Sciatic nerve (tissue), 2 donors: ENCODE measurements at regions of chr4 and their contacts with region 1.

Region 1: GRCh38 chr4:18754191-18754590 is 732.6 kb upstream of the LCORL start:
- DNase-seq: no peak
- ATAC-seq: no peak

Region 2: DNA sequence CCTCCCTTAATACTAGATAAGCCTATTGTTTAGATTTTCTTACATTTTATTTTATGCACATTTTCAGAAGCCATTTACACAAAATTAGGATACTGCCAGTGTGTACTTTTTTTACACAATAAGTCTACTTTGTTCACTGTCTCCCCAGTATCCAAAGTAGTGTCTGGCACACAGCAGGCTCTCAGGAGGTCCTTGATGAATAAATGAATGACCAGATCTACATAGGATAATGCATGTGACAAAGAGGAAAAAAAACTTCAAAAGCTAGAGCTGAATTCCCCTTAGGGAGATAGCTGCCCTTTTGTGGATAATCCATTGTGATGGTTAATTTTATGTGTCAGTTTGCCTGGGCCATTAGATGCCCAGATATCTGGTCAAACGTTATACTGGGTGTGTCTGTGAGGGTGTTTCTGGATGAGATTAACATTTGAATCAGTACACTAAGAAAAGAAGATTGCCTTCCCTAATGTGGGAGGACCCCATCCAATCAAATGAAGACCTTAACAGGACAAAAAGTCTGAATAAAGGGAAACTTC is 1303.9 kb before region 1 on chr4:
- intact Hi-C with region 1: no loop called
- DNase-seq: no peak
- ATAC-seq: no peak

Region 3: GRCh38 chr4:17664755-17665154 is 1089.4 kb before region 1 on chr4:
- intact Hi-C with region 1: loop called (anchors 10 kb)
- DNase-seq: no peak
- ATAC-seq: no peak

Region 4: DNA sequence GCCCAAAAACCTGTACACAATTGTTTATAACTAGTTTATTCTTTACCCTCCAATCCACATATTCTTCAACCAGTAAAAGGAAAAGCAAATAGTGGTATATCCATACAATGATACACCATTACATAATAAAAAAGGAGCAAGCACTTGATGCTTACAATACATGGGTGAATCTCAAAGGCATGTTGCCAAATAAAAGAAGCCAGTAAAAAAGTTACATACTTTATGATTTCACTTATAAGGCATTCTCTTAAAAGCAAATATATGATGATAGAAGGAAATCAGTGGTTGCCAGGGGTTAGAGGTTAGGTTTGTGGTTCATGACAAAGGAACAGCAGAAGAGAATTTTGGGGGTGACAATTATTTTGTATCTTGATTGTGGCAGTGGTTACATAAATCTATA is 163.5 kb after region 1 on chr4:
- intact Hi-C with region 1: no loop called
- DNase-seq: no peak
- ATAC-seq: no peak